Spleen (tissue), 13 donors: ENCODE measurements at regions of chr16 and their contacts with region 1.

Region 1: GRCh38 chr16:53054670-53055485 is at the start of gene CHD9:
- DNase-seq: peak; percentile 95
- H3K4me3 ChIP-seq: peak within 1 kb of the TSS; percentile 55 to 79 (median 64)
- H3K27ac ChIP-seq: peak within 1 kb of the TSS; percentile 76 to 90 (median 88)
- H3K4me1 ChIP-seq: peaks cover 21 to 60% (median 49%) of the 10 kb centered on the region in 6 donors
- H3K27me3 ChIP-seq: no peaks in the 10 kb centered on the region
- CTCF ChIP-seq: peak; percentile 98 to 100 (median 99)
- POLR2A ChIP-seq: peak in 1 of 3 donors; percentile 8
- total RNA-seq, gene CHD9: 63.4 to 93.3 (median 77.6) TPM

Region 2: GRCh38 chr16:53007095-53007494 is 47.8 kb before region 1 on chr16:
- intact Hi-C with region 1: no loop called
- DNase-seq: no peak
- H3K4me3 ChIP-seq: no peak overlapping the region
- H3K27ac ChIP-seq: no peak overlapping the region
- H3K4me1 ChIP-seq: no peaks in the 10 kb centered on the region
- H3K27me3 ChIP-seq: peaks cover 0 to 10% (median 0%) of the 10 kb centered on the region in 7 donors
- CTCF ChIP-seq: no peak
- POLR2A ChIP-seq: no peak

Region 3: GRCh38 chr16:53100893-53101292 is 46.0 kb after region 1 on chr16:
- intact Hi-C with region 1: no loop called
- DNase-seq: no peak
- H3K4me3 ChIP-seq: no peak overlapping the region
- H3K27ac ChIP-seq: peak overlapping the region in 5 of 8 donors; percentile 89 to 93 (median 90)
- H3K4me1 ChIP-seq: peaks cover 31 to 64% (median 47%) of the 10 kb centered on the region in 6 donors
- H3K27me3 ChIP-seq: no peaks in the 10 kb centered on the region
- CTCF ChIP-seq: no peak
- POLR2A ChIP-seq: no peak

Region 4: DNA sequence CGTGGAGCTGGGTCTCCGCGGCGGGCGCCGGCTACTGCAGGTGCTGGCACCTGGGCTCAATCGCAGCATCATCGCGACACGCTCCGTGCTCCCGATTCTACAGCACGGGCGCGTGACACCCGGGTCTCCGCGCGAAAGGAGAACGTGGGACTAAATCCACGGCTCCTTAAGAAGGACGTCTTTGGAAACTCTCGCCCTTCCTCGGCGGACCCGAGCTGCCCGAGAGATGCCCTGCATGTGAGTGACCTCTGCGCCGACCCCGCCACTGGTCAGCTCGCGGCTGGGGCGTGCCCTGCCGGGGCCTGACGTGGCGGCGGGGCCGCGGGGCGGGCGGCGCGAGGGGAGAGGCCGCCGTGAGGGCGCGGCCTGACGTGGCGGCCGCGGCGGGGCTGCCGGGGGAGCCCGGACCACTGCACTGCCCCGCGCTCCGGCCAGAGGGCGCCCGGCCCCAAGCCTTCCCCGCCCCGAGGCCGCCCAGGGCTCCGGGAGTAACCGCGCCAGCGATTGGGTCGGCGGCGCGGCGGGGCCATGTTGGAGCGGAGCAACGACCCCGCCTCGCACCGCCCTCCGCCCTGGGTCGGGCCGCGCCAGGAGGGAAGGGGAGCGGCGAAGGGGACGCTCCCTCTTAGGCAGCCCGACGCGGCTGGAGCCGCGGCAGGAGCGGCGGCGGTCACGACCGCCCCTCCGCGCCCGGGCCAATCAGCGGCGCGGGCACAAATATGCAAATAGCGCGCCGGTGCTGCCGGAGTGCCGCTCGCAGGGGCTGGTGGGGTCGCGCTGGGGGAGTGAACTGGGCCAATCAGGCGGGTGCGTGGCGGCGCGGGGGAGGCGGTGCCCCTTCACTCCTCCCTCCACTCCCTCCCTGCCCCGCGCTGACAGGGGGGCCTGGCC is 75.5 kb after region 1 on chr16:
- intact Hi-C with region 1: loop called (anchors 10 kb)
- DNase-seq: peak; percentile 99
- H3K4me3 ChIP-seq: peak overlapping the region; percentile 61 to 94 (median 86)
- H3K27ac ChIP-seq: peak overlapping the region; percentile 85 to 98 (median 96)
- H3K4me1 ChIP-seq: peaks cover 0 to 56% (median 25%) of the 10 kb centered on the region in 6 donors
- H3K27me3 ChIP-seq: no peaks in the 10 kb centered on the region
- CTCF ChIP-seq: peak in 10 of 11 experiments; percentile 9 to 88 (median 72)
- POLR2A ChIP-seq: peak in 1 of 3 donors; percentile 17

Region 5: DNA sequence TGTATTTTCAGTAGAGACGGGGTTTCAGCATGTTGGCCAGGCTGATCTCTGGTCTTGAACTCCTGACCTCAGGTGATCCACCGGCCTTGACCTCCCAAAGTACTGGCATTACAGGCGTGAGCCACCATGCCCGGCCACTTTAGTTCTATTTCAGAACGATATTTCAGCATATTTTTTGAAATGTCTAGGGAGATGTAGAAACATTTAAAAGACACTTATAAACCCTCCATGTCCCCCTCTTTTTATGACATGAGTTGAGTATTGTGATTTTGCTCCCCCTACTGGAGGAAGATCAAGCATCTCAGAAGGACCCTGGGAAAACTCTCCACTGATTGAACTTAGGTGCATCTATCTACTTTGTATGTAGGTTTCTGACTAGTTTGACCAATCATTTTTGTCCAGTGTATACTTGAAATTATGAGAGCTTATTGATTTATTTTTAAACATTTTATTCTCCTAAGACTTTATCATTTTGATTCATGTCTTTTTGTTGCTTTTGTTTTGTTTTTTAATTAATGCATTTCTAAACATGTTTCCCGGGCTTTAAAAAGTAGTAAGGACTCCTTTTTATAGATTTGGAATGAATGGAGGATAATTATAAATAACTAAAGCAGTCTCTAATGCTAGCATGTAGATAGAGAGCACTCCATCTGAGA is 105.0 kb after region 1 on chr16:
- intact Hi-C with region 1: loop called (anchors 10 kb)
- DNase-seq: no peak
- H3K4me3 ChIP-seq: no peak overlapping the region
- H3K27ac ChIP-seq: no peak overlapping the region
- H3K4me1 ChIP-seq: peaks cover 0 to 7% (median 0%) of the 10 kb centered on the region in 6 donors
- H3K27me3 ChIP-seq: no peaks in the 10 kb centered on the region
- CTCF ChIP-seq: peak; percentile 46 to 83 (median 71)
- POLR2A ChIP-seq: no peak

Region 6: GRCh38 chr16:53220585-53220984 is 165.7 kb after region 1 on chr16:
- intact Hi-C with region 1: loop called (anchors 10 kb)
- DNase-seq: no peak
- H3K4me3 ChIP-seq: no peak overlapping the region
- H3K27ac ChIP-seq: peak overlapping the region in 7 of 8 donors; percentile 52 to 79 (median 77)
- H3K4me1 ChIP-seq: peaks cover 24 to 83% (median 60%) of the 10 kb centered on the region in 6 donors
- H3K27me3 ChIP-seq: no peaks in the 10 kb centered on the region
- CTCF ChIP-seq: peak in 6 of 11 experiments; percentile 18 to 40 (median 22)
- POLR2A ChIP-seq: no peak

Region 7: DNA sequence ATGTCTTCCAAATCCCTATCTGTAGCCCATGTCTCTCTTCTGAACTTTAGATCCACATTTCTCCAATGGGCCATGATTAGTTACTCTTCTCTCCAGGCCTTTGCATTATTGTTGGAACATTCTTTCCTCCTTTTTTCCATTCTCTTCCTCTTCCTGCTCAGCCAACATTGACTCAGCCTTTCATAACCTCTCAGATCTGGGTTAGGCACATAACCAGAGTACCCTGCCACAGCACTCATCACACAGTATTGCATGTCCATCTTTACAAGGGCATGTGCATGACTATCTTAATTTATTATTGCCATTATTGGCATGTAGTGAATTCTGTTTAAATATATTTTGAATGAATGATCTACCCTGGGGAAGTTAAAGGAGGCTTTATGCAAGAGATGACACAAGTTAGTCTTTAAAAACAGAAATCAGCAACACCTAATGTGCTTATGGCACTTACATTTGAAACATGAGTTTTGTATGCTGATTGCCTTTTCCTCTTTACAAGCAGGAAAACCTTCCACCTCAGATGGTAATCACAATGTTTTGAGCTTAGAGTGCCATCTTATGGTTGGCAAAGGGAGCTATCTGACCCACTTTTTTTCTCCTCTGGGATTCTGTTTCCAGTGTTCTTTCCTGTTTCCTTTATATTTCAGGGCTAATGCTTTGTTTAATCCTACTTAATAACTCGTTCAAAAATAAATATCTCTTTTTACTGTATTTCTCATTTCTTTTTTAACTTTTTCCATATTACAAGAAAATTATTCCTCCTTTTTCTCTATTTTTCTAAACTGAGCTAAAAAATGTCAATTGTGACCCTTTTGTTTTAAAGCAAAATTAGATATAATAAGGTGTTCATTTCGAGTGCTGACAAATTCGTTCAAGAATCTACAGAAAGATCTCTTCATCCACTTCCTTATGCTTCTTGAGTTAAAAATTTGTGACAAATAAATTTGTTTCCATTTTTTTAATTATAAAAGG is 228.4 kb after region 1 on chr16:
- intact Hi-C with region 1: loop called (anchors 10 kb)
- DNase-seq: no peak
- H3K4me3 ChIP-seq: no peak overlapping the region
- H3K27ac ChIP-seq: peak overlapping the region in 3 of 8 donors; percentile 2 to 12 (median 5)
- H3K4me1 ChIP-seq: peaks cover 0 to 12% (median 0%) of the 10 kb centered on the region in 6 donors
- H3K27me3 ChIP-seq: no peaks in the 10 kb centered on the region
- CTCF ChIP-seq: peak in 8 of 11 experiments; percentile 30 to 58 (median 48)
- POLR2A ChIP-seq: no peak